CD4-positive, alpha-beta T cell (primary cell): ENCODE measurements at regions of chr3 and their contacts with region 1.

Region 1: GRCh38 chr3:185282696-185283394 is 29.0 kb upstream of the EHHADH start:
- DNase-seq: peak; percentile 83 to 97 (median 91)
- ATAC-seq: peak; percentile 99
- H3K4me3 ChIP-seq: peak overlapping the region; percentile 77
- H3K4me3 Mint-ChIP-seq: peak overlapping the region; percentile 92
- H3K27ac ChIP-seq: peak overlapping the region in 1 of 2 donors; percentile 65
- H3K27ac Mint-ChIP-seq: peak overlapping the region; percentile 84
- H3K4me1 ChIP-seq: peaks cover 14% of the 10 kb centered on the region
- H3K4me1 Mint-ChIP-seq: peaks cover 18% of the 10 kb centered on the region
- H3K27me3 ChIP-seq: peaks cover 3 to 10% of the 10 kb centered on the region in 2 experiments
- H3K27me3 Mint-ChIP-seq: peaks cover 26% of the 10 kb centered on the region
- CTCF ChIP-seq: no peak

Region 2: GRCh38 chr3:185188816-185189215 is 94.0 kb before region 1 on chr3:
- CTCF ChIA-PET with region 1: no interaction called
- POLR2A ChIA-PET with region 1: no interaction called
- intact Hi-C with region 1: no loop called
- DNase-seq: no peak
- ATAC-seq: no peak
- H3K4me3 ChIP-seq: no peak overlapping the region
- H3K4me3 Mint-ChIP-seq: no peak overlapping the region
- H3K27ac ChIP-seq: no peak overlapping the region
- H3K27ac Mint-ChIP-seq: no peak overlapping the region
- H3K4me1 ChIP-seq: no peaks in the 10 kb centered on the region
- H3K4me1 Mint-ChIP-seq: no peaks in the 10 kb centered on the region
- H3K27me3 ChIP-seq: no peaks in the 10 kb centered on the region
- H3K27me3 Mint-ChIP-seq: peaks cover 4% of the 10 kb centered on the region
- CTCF ChIP-seq: no peak

Region 3: GRCh38 chr3:185381320-185382058 is 98.6 kb after region 1 on chr3:
- CTCF ChIA-PET with region 1: no interaction called
- POLR2A ChIA-PET with region 1: no interaction called
- intact Hi-C with region 1: no loop called
- DNase-seq: no peak
- ATAC-seq: no peak
- H3K4me3 ChIP-seq: no peak overlapping the region
- H3K4me3 Mint-ChIP-seq: no peak overlapping the region
- H3K27ac ChIP-seq: no peak overlapping the region
- H3K27ac Mint-ChIP-seq: no peak overlapping the region
- H3K4me1 ChIP-seq: no peaks in the 10 kb centered on the region
- H3K4me1 Mint-ChIP-seq: no peaks in the 10 kb centered on the region
- H3K27me3 ChIP-seq: no peaks in the 10 kb centered on the region
- H3K27me3 Mint-ChIP-seq: peaks cover 6% of the 10 kb centered on the region
- CTCF ChIP-seq: no peak

Region 4: GRCh38 chr3:185498503-185499396 is 215.9 kb after region 1 on chr3 and contains the start of gene TMEM41A:
- CTCF ChIA-PET with region 1: no interaction called
- POLR2A ChIA-PET with region 1: no interaction called
- intact Hi-C with region 1: loop called in 1 of 2 experiments (anchors 2 kb)
- DNase-seq: peak; percentile 80 to 91 (median 86)
- ATAC-seq: peak; percentile 98
- H3K4me3 ChIP-seq: peak within 1 kb of the TSS; percentile 97
- H3K4me3 Mint-ChIP-seq: peak within 1 kb of the TSS; percentile 97
- H3K27ac ChIP-seq: peak within 1 kb of the TSS; percentile 24 to 69
- H3K27ac Mint-ChIP-seq: peak within 1 kb of the TSS; percentile 87
- H3K4me1 ChIP-seq: peaks cover 22% of the 10 kb centered on the region
- H3K4me1 Mint-ChIP-seq: peaks cover 24% of the 10 kb centered on the region
- H3K27me3 ChIP-seq: no peaks in the 10 kb centered on the region
- H3K27me3 Mint-ChIP-seq: no peaks in the 10 kb centered on the region
- CTCF ChIP-seq: no peak
- total RNA-seq, gene TMEM41A: 26.8 to 29.1 TPM